ENCODE measurements at regions of chr4 and their contacts with region 1.

Region 1: GRCh38 chr4:82284858-82285805 is 88.7 kb downstream of the HNRNPD start:
- DNase-seq: peak; percentile 98 to 99 (median 99)
- H3K4me3 ChIP-seq: peak overlapping the region; percentile 46 to 75 (median 52)
- H3K4me3 Mint-ChIP-seq: peak overlapping the region; percentile 74 to 82
- H3K27ac ChIP-seq: peak overlapping the region; percentile 73 to 78
- H3K27ac Mint-ChIP-seq: peak overlapping the region; percentile 77 to 92 (median 87)
- H3K4me1 ChIP-seq: peaks cover 12 to 15% of the 10 kb centered on the region in 2 donors
- H3K4me1 Mint-ChIP-seq: peaks cover 13% of the 10 kb centered on the region
- H3K27me3 ChIP-seq: peaks cover 2 to 4% of the 10 kb centered on the region in 2 donors
- H3K27me3 Mint-ChIP-seq: peaks cover 5 to 22% (median 12%) of the 10 kb centered on the region in 3 donors
- CTCF ChIP-seq: peak; percentile 99

Region 2: GRCh38 chr4:82352913-82353366 is 67.8 kb after region 1 on chr4:
- intact Hi-C with region 1: loop called in 1 of 2 experiments (anchors 10 kb)
- DNase-seq: no peak
- H3K4me3 ChIP-seq: no peak overlapping the region
- H3K4me3 Mint-ChIP-seq: no peak overlapping the region
- H3K27ac ChIP-seq: peak overlapping the region in 1 of 2 donors; percentile 8
- H3K27ac Mint-ChIP-seq: peak overlapping the region in 3 of 7 donors; percentile 19 to 79 (median 40)
- H3K4me1 ChIP-seq: no peaks in the 10 kb centered on the region
- H3K4me1 Mint-ChIP-seq: peaks cover 7% of the 10 kb centered on the region
- H3K27me3 ChIP-seq: no peaks in the 10 kb centered on the region
- H3K27me3 Mint-ChIP-seq: no peaks in the 10 kb centered on the region
- CTCF ChIP-seq: no peak

Region 3: GRCh38 chr4:82360298-82361177 is 75.4 kb after region 1 on chr4:
- intact Hi-C with region 1: loop called (anchors 10 kb)
- DNase-seq: peak; percentile 23 to 57 (median 54)
- H3K4me3 ChIP-seq: no peak overlapping the region
- H3K4me3 Mint-ChIP-seq: no peak overlapping the region
- H3K27ac ChIP-seq: peak overlapping the region in 1 of 2 donors; percentile 55
- H3K27ac Mint-ChIP-seq: peak overlapping the region; percentile 10 to 91 (median 68)
- H3K4me1 ChIP-seq: peaks cover 25 to 43% of the 10 kb centered on the region in 2 donors
- H3K4me1 Mint-ChIP-seq: peaks cover 53% of the 10 kb centered on the region
- H3K27me3 ChIP-seq: no peaks in the 10 kb centered on the region
- H3K27me3 Mint-ChIP-seq: no peaks in the 10 kb centered on the region
- CTCF ChIP-seq: peak; percentile 86

Region 4: GRCh38 chr4:82415922-82416365 is 130.8 kb after region 1 on chr4:
- intact Hi-C with region 1: no loop called
- DNase-seq: no peak
- H3K4me3 ChIP-seq: no peak overlapping the region
- H3K4me3 Mint-ChIP-seq: no peak overlapping the region
- H3K27ac ChIP-seq: no peak overlapping the region
- H3K27ac Mint-ChIP-seq: no peak overlapping the region
- H3K4me1 ChIP-seq: no peaks in the 10 kb centered on the region
- H3K4me1 Mint-ChIP-seq: peaks cover 2% of the 10 kb centered on the region
- H3K27me3 ChIP-seq: no peaks in the 10 kb centered on the region
- H3K27me3 Mint-ChIP-seq: peaks cover 5 to 7% (median 5%) of the 10 kb centered on the region in 3 donors
- CTCF ChIP-seq: no peak

Region 5: DNA sequence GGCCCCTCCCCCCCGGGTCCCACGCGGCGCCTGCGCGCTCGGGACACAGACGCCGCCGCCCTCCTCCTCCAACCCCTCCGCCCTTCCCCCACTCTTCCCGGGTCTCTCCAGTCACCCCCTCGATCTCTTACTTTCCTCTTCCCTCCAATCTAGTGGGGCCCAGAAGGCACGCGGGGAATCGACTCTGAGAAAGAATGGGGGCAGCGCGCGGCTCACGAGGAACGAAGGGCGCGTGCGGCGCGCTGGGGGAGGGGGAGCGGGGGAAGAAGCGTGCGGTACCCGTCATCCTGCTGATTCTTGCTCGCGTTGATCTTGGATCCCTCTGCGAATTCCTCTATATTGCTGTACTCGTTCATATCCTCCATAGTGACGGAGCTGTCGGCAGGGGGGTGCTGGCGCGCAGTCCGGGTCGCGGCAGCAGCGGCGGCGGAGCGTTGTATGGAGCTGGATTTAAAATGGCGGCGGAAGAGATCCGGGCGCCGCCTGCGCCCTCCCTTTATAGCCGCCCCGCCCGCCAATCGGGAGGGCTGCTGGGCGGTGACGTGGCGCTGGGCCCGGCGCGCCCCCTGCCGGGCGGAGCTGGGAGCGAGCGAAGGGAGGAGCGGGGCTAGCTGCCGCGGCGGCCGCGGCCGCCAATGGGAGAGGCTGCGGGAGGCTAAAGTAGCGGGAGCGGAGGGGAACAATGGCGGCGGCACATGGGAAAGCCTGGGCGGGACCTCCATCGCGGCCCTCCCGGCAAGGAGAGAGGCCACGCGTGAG is 144.0 kb after region 1 on chr4:
- intact Hi-C with region 1: loop called (anchors 5 to 10 kb)
- DNase-seq: peak; percentile 90 to 94 (median 92)
- H3K4me3 ChIP-seq: peak overlapping the region; percentile 57 to 98 (median 80)
- H3K4me3 Mint-ChIP-seq: peak overlapping the region; percentile 99
- H3K27ac ChIP-seq: peak overlapping the region; percentile 90 to 99
- H3K27ac Mint-ChIP-seq: peak overlapping the region; percentile 96 to 99 (median 98)
- H3K4me1 ChIP-seq: peaks cover 19 to 39% of the 10 kb centered on the region in 2 donors
- H3K4me1 Mint-ChIP-seq: peaks cover 44% of the 10 kb centered on the region
- H3K27me3 ChIP-seq: no peaks in the 10 kb centered on the region
- H3K27me3 Mint-ChIP-seq: no peaks in the 10 kb centered on the region
- CTCF ChIP-seq: peak; percentile 98

Measured in CD14-positive monocyte (primary cell).